Activated CD4-positive, alpha-beta memory T cell treated with anti-CD3 and anti-CD28 coated beads for 36 hours (primary cell): ENCODE measurements at regions of chr12 and their contacts with region 1.

Region 1: GRCh38 chr12:47356129-47356700 is 276.5 kb upstream of the AMIGO2 start:
- DNase-seq: peak; percentile 50
- H3K4me3 Mint-ChIP-seq: peak overlapping the region; percentile 66
- H3K27ac Mint-ChIP-seq: peak overlapping the region; percentile 99
- H3K4me1 Mint-ChIP-seq: peaks cover 76% of the 10 kb centered on the region
- H3K27me3 Mint-ChIP-seq: no peaks in the 10 kb centered on the region

Region 2: DNA sequence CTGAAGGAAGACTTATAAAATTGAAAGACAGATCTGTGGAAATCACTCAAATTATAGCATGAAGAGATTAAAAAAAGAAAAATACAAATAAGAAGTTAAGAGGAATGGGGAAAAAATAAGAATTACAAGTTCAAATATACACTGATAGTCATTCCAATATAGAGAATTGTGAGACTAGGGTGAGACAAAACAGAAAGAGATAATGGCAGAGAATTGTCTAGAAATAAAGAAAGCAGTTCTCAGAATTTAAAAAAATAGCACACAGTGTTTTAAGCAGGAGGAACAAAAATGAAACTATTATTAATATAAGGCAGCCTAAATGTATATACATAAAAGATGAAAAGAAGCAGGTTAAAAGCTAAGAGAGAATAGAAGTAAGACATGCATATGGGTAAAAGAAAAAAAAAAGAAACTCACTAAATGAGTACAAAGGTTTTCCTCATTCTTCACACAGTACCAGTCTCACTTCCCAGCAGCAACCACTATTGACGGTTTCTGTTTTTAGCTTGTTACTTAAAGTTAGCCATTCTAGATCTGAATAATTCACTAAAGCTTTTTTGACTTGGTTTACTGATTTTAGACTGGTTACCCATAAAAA is 561.5 kb before region 1 on chr12:
- CTCF ChIA-PET with region 1: no interaction called
- POLR2A ChIA-PET with region 1: no interaction called
- intact Hi-C with region 1: loop called (anchors 10 kb)
- DNase-seq: peak; percentile 16
- H3K4me3 Mint-ChIP-seq: no peak overlapping the region
- H3K27ac Mint-ChIP-seq: peak overlapping the region; percentile 46
- H3K4me1 Mint-ChIP-seq: peaks cover 17% of the 10 kb centered on the region
- H3K27me3 Mint-ChIP-seq: peaks cover 16% of the 10 kb centered on the region

Region 3: GRCh38 chr12:47276621-47277309 is 79.5 kb before region 1 on chr12:
- CTCF ChIA-PET with region 1: no interaction called
- POLR2A ChIA-PET with region 1: no interaction called
- intact Hi-C with region 1: loop called (anchors 1 kb)
- DNase-seq: peak; percentile 70
- H3K4me3 Mint-ChIP-seq: peak overlapping the region; percentile 33
- H3K27ac Mint-ChIP-seq: peak overlapping the region; percentile 95
- H3K4me1 Mint-ChIP-seq: peaks cover 82% of the 10 kb centered on the region
- H3K27me3 Mint-ChIP-seq: no peaks in the 10 kb centered on the region

Region 4: DNA sequence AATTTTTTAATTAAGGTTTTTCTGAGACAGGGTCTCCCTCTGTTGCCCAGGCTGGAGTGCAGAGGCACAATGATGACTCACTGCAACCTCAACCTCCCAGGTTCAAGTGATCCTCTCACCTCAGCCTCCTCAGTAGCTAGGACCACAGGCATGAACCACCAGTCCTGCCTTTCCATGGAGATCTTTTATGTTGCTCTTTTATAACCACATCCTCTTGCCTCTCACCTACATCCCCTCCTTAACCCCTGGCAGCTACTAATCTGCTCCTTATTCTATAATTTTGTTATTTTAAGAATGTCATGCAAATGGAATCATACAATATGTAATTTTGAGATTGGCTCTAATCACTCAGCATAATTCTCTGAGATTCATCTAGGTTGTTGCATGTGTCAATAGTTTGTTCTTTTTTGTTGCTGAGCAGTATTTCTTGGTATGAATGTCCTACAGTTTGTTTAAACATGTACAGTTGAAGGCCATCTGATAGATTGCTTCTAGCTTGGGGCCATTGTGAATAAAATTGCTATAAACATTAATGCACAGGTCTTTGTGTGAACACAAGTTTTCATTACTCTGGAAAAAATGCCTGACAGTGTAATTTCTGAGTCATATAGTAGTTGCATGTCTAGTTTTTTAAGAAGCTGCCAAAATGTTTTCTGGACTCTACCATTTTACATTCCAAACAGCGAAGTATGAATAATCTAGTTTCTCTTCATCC is 27.2 kb before region 1 on chr12:
- CTCF ChIA-PET with region 1: interaction called, 4 read pairs
- POLR2A ChIA-PET with region 1: no interaction called
- intact Hi-C with region 1: loop called (anchors 2 kb)
- DNase-seq: peak; percentile 36
- H3K4me3 Mint-ChIP-seq: no peak overlapping the region
- H3K27ac Mint-ChIP-seq: peak overlapping the region; percentile 67
- H3K4me1 Mint-ChIP-seq: peaks cover 28% of the 10 kb centered on the region
- H3K27me3 Mint-ChIP-seq: no peaks in the 10 kb centered on the region